RWPE1 (cell line): ENCODE measurements at regions of chr15 and their contacts with region 1.

Region 1: GRCh38 chr15:62145015-62145735 is 19.9 kb downstream of the C2CD4B start:
- DNase-seq: no peak
- H3K27ac ChIP-seq: peak overlapping the region; percentile 45
- CTCF ChIP-seq: no peak

Region 2: GRCh38 chr15:62035256-62035908 is 109.8 kb before region 1 on chr15:
- CTCF ChIA-PET with region 1: no interaction called
- POLR2A ChIA-PET with region 1: no interaction called
- DNase-seq: peak; percentile 44
- H3K27ac ChIP-seq: no peak overlapping the region
- CTCF ChIP-seq: no peak

Region 3: GRCh38 chr15:62125773-62126172 is 19.4 kb before region 1 on chr15:
- CTCF ChIA-PET with region 1: no interaction called
- POLR2A ChIA-PET with region 1: no interaction called
- DNase-seq: no peak
- H3K27ac ChIP-seq: no peak overlapping the region
- CTCF ChIP-seq: peak; percentile 21; the same call in 1 of the 2 replicates

Region 4: GRCh38 chr15:62306851-62307504 is 161.8 kb after region 1 on chr15:
- CTCF ChIA-PET with region 1: interaction called, 11 read pairs
- POLR2A ChIA-PET with region 1: no interaction called
- DNase-seq: peak; percentile 71
- H3K27ac ChIP-seq: no peak overlapping the region
- CTCF ChIP-seq: peak; percentile 76